ENCODE measurements at regions of chr15 and their contacts with region 1.

Region 1: GRCh38 chr15:83011271-83012075 is at the start of gene C15orf40:
- DNase-seq: peak; percentile 91
- ATAC-seq: peak; percentile 88
- H3K4me3 Mint-ChIP-seq: peak within 1 kb of the TSS; percentile 93
- H3K27ac Mint-ChIP-seq: peak within 1 kb of the TSS; percentile 89
- H3K4me1 Mint-ChIP-seq: peaks cover 54% of the 10 kb centered on the region
- H3K27me3 Mint-ChIP-seq: no peaks in the 10 kb centered on the region
- total RNA-seq, gene C15orf40: 28.3 to 29.0 TPM

Region 2: GRCh38 chr15:82985688-82986441 is 25.6 kb before region 1 on chr15 and contains the start of gene RAMAC:
- CTCF ChIA-PET with region 1: interaction called, 16 read pairs
- DNase-seq: peak; percentile 95
- ATAC-seq: peak; percentile 95
- H3K4me3 Mint-ChIP-seq: peak within 1 kb of the TSS; percentile 100
- H3K27ac Mint-ChIP-seq: peak within 1 kb of the TSS; percentile 97
- H3K4me1 Mint-ChIP-seq: peaks cover 30% of the 10 kb centered on the region
- H3K27me3 Mint-ChIP-seq: no peaks in the 10 kb centered on the region
- total RNA-seq, gene RAMAC: 20.5 to 27.8 TPM

Region 3: GRCh38 chr15:82999905-83000671 is 11.4 kb before region 1 on chr15:
- CTCF ChIA-PET with region 1: interaction called, 30 read pairs
- DNase-seq: peak; percentile 49
- ATAC-seq: peak; percentile 91
- H3K4me3 Mint-ChIP-seq: peak overlapping the region; percentile 63
- H3K27ac Mint-ChIP-seq: peak overlapping the region; percentile 68
- H3K4me1 Mint-ChIP-seq: peaks cover 8% of the 10 kb centered on the region
- H3K27me3 Mint-ChIP-seq: no peaks in the 10 kb centered on the region

Region 4: DNA sequence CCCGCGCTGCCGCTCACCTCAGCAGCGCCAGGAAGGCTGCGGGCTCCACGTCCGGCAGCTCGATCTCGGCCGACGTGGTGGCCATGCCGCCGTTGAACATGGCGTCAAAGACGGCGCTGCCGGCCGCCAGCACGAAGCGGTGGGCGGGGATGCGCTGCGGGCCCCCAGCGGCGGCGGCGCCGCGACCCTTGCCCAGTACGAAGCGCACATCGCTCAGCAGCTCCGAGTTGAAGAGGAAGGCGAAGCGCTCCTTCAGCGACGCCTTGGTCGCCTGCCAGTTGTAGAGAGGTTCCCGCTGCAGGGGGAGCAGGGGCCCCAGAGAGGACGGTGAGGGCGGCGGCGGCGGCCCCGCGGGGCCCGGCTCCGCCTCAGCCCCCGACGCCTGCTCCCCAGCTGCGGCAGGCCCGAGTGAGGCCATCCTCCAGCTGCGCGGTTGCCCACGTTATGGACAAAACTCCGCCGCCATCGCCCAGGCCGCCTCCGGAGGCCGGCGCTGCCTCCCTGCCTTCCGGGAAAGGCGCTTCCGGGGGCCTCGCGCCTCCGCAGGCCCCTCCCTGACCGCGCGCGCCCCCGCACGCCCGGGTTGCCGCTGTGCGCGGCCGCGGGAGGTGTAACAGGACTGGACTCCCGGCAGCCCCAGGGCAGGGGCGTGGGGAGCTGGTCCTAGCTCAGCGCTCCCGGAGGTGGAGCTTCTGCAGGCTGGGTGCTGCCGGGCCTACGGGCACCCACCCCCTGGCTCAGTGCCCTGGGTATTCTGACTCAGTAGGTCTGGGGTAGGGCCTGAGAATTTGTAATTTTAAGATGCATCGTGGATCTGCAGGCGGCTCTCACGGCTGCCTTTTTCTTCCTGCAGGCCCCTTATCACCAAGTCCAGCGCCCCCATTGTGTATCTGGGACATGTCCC is 55.5 kb after region 1 on chr15 and contains the start of gene BTBD1:
- CTCF ChIA-PET with region 1: interaction called, 21 read pairs
- DNase-seq: peak; percentile 90
- ATAC-seq: peak; percentile 88
- H3K4me3 Mint-ChIP-seq: peak within 1 kb of the TSS; percentile 80
- H3K27ac Mint-ChIP-seq: peak within 1 kb of the TSS; percentile 75
- H3K4me1 Mint-ChIP-seq: peaks cover 3% of the 10 kb centered on the region
- H3K27me3 Mint-ChIP-seq: no peaks in the 10 kb centered on the region
- total RNA-seq, gene BTBD1: 62.5 to 73.2 TPM

Region 5: DNA sequence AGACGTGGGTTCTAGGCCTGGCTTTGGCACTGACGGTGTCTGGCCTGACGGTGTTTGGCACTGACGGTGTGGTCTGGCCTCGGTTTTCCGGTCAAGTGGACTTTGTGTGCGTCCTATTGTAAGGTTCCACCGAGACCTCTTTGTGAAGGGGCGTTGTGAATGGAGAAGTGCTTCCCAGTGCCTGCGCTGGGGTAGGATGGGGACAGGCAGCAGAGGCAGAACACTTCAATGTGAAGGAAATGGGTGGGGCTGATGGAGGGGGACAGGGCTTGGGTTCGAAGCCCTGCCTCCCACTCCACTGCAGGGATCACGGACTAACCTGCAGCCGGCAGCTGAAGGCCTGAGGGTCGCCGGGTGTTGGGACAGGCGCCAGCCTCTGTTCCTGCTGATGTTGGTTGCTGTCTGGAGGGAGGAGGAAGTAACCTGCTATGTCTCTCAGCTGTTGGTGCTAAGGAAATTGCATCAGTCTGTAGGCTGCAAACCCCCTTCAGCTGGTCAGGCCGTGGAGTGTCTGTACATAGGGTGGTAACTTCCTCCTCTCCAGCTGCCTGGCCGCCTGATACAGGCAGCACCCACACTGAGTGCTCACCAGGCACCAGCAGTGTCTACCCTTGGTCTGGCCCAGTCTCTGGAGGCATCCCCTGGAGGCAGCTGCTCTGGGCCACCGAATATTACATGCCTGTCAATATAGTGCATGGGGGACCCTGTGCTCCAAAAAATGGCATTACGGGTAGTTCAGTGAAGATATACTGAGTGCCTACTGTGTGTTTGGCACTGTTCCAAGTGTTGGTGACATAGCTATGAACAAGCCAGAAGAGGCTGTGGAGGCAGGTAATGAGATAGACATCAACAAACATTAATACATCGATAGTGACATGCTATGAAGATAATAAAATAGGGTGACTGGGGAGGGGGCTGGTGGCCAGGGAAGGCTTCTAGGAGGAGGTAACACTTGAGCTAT is 97.1 kb after region 1 on chr15:
- CTCF ChIA-PET with region 1: interaction called, 11 read pairs
- DNase-seq: peak; percentile 77
- ATAC-seq: peak; percentile 72
- H3K4me3 Mint-ChIP-seq: peak overlapping the region; percentile 93
- H3K27ac Mint-ChIP-seq: peak overlapping the region; percentile 89
- H3K4me1 Mint-ChIP-seq: peaks cover 41% of the 10 kb centered on the region
- H3K27me3 Mint-ChIP-seq: peaks cover 28% of the 10 kb centered on the region

Region 6: GRCh38 chr15:83207622-83208411 is 196.3 kb after region 1 on chr15 and contains the start of gene HDGFL3:
- CTCF ChIA-PET with region 1: interaction called, 12 read pairs
- DNase-seq: peak; percentile 48
- ATAC-seq: peak; percentile 69
- H3K4me3 Mint-ChIP-seq: peak within 1 kb of the TSS; percentile 83
- H3K27ac Mint-ChIP-seq: peak within 1 kb of the TSS; percentile 5
- H3K4me1 Mint-ChIP-seq: peaks cover 11% of the 10 kb centered on the region
- H3K27me3 Mint-ChIP-seq: peaks cover 40% of the 10 kb centered on the region
- total RNA-seq, gene HDGFL3: 20.4 to 91.0 TPM

Measured in activated CD8-positive, alpha-beta memory T cell treated with anti-CD3 and anti-CD28 coated beads, Interleukin-2, amount 10 ng/mL, durations not matched to agents 7 days and 5 days (primary cell).